Heart right ventricle (tissue), 16 donors: ENCODE measurements at regions of chr13 and their contacts with region 1.

Region 1: GRCh38 chr13:39051157-39051556 is 12.9 kb downstream of the NHLRC3 start:
- DNase-seq: no peak
- ATAC-seq: peak in 1 of 8 donors; percentile 46
- H3K4me3 ChIP-seq: no peak overlapping the region
- H3K27ac ChIP-seq: no peak overlapping the region
- H3K4me1 ChIP-seq: peaks cover 0 to 3% (median 0%) of the 10 kb centered on the region in 9 donors
- H3K27me3 ChIP-seq: no peaks in the 10 kb centered on the region
- CTCF ChIP-seq: peak; percentile 26 to 73 (median 56)

Region 2: GRCh38 chr13:39616087-39616694 is 565.0 kb after region 1 on chr13:
- intact Hi-C with region 1: loop called (anchors 2 to 5 kb)
- DNase-seq: peak in 1 of 2 donors; percentile 70
- ATAC-seq: peak; percentile 68 to 87 (median 82)
- H3K4me3 ChIP-seq: no peak overlapping the region
- H3K27ac ChIP-seq: no peak overlapping the region
- H3K4me1 ChIP-seq: peaks cover 0 to 12% (median 0%) of the 10 kb centered on the region in 9 donors
- H3K27me3 ChIP-seq: no peaks in the 10 kb centered on the region
- CTCF ChIP-seq: peak; percentile 81 to 96 (median 92)

Region 3: GRCh38 chr13:39676315-39676876 is 625.2 kb after region 1 on chr13:
- intact Hi-C with region 1: loop called in 8 of 10 experiments (anchors 2 to 10 kb)
- DNase-seq: peak in 1 of 2 donors; percentile 36
- ATAC-seq: no peak
- H3K4me3 ChIP-seq: no peak overlapping the region
- H3K27ac ChIP-seq: no peak overlapping the region
- H3K4me1 ChIP-seq: peaks cover 0 to 4% (median 0%) of the 10 kb centered on the region in 9 donors
- H3K27me3 ChIP-seq: no peaks in the 10 kb centered on the region
- CTCF ChIP-seq: peak; percentile 14 to 72 (median 56)